Activated CD4-positive, alpha-beta memory T cell treated with anti-CD3 and anti-CD28 coated beads for 36 hours (primary cell): ENCODE measurements at regions of chr2 and their contacts with region 1.

Region 1: DNA sequence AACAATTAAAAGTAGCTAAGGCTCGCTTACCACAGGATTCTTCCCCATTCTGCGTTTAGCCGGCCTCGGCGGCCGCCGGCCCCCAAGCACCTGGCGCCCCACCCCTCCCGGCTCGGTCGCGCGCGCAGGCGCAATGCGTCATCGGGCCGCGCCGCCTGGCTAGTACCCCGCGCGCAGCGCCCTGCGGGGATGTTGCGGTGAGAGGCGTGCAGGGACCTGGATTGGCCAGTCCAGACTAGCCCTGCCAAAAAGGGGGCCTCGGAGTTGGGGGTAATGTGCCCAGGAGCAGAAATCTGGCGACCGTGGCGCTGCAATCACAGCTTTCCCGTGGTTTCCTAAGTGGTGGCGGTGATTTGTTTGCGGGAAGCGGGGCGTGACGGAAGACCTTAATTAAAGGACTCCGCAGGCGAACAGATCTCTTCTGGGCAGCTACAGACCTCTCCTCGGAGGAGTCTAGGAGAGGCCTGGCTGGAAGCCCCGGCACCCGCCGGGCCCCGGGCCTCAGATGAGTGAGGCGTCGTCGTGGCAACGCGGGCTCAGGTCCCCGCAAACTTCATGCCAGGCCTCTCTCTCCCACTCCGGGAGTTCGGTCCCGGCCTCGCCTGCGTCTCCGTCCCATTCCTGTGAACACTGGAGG is 606 bp downstream of the TMEM237 start:
- DNase-seq: peak; percentile 89
- H3K4me3 Mint-ChIP-seq: peak overlapping the region; percentile 87
- H3K27ac Mint-ChIP-seq: peak overlapping the region; percentile 84
- H3K4me1 Mint-ChIP-seq: peaks cover 10% of the 10 kb centered on the region
- H3K27me3 Mint-ChIP-seq: no peaks in the 10 kb centered on the region

Region 2: DNA sequence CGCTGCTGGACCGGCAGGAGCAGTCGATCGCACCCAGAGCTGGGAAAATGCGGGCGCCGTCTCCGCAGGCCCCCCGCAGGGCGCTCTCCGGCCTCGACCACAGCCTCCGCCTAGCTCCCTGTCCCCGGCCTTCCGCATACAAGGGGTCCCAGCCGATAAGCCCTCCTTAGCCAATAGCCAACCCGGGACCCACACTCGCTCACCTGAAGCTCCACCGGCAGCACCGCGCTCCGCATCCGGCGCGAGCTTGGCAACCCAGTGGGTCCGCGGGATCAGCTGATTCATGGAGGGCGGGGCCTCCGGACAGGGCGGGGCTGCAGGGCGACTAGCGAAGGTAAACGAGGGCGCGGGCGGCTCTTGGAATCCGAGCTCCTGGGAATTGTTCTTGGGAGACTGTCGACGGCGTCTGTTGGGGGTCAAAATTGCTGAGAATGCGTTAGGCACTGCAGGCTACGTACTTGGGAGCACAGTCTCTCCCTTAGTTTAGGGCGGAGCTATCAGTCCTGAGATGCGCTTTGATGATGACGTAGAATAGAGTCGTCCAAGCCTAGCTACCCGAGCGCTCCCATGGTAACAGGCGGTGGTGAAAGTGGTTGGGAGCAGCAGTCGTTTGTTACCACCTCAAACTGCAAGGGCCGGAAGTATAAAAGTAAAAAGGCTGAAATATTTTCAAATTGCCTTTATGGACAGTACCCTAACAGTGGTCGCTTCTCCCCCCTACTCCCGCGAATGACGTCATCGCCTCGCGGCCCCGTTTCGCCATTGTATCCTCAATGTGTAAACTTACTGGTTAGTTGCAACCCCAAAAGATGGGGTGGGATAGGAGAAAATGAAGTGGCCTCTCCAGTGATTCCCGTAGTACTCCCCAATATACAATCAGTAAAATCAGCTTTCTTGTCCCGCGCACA is 138.2 kb after region 1 on chr2 and contains the start of gene ALS2:
- CTCF ChIA-PET with region 1: no interaction called
- POLR2A ChIA-PET with region 1: interaction called, 8 read pairs
- intact Hi-C with region 1: loop called (anchors 1 kb)
- DNase-seq: peak; percentile 96
- H3K4me3 Mint-ChIP-seq: peak within 1 kb of the TSS; percentile 98
- H3K27ac Mint-ChIP-seq: peak within 1 kb of the TSS; percentile 93
- H3K4me1 Mint-ChIP-seq: peaks cover 15% of the 10 kb centered on the region
- H3K27me3 Mint-ChIP-seq: peaks cover 3% of the 10 kb centered on the region
- total RNA-seq, gene ALS2: 11.0 to 12.6 TPM

Region 3: GRCh38 chr2:202033321-202034248 is 390.9 kb after region 1 on chr2 and contains the start of gene FZD7:
- CTCF ChIA-PET with region 1: no interaction called
- POLR2A ChIA-PET with region 1: no interaction called
- intact Hi-C with region 1: loop called (anchors 5 kb)
- DNase-seq: peak; percentile 91
- H3K4me3 Mint-ChIP-seq: peak within 1 kb of the TSS; percentile 80
- H3K27ac Mint-ChIP-seq: no peak within 1 kb of the TSS
- H3K4me1 Mint-ChIP-seq: peaks cover 11% of the 10 kb centered on the region
- H3K27me3 Mint-ChIP-seq: peaks cover 19% of the 10 kb centered on the region
- total RNA-seq, gene FZD7: 0.58 to 0.62 TPM

Region 4: GRCh38 chr2:202375609-202376408 is 733.1 kb after region 1 on chr2 and contains the start of gene BMPR2:
- CTCF ChIA-PET with region 1: no interaction called
- POLR2A ChIA-PET with region 1: no interaction called
- intact Hi-C with region 1: loop called (anchors 1 kb)
- DNase-seq: peak; percentile 88
- H3K4me3 Mint-ChIP-seq: peak within 1 kb of the TSS; percentile 98
- H3K27ac Mint-ChIP-seq: peak within 1 kb of the TSS; percentile 80
- H3K4me1 Mint-ChIP-seq: peaks cover 24% of the 10 kb centered on the region
- H3K27me3 Mint-ChIP-seq: no peaks in the 10 kb centered on the region
- total RNA-seq, gene BMPR2: 8.2 to 8.7 TPM